ENCODE measurements at regions of chr6 and their contacts with region 1.

Region 1: GRCh38 chr6:155174576-155175211 is 89.1 kb upstream of the CLDN20 start:
- DNase-seq: peak in 3 of 5 donors; percentile 45 to 52 (median 50)
- ATAC-seq: peak; percentile 58 to 90 (median 83)
- H3K4me3 ChIP-seq: no peak overlapping the region
- H3K27ac ChIP-seq: no peak overlapping the region
- H3K4me1 ChIP-seq: peaks cover 0 to 27% (median 9%) of the 10 kb centered on the region in 12 donors
- H3K27me3 ChIP-seq: no peaks in the 10 kb centered on the region
- CTCF ChIP-seq: peak; percentile 35 to 75 (median 62)
- POLR2A ChIP-seq: no peak

Region 2: DNA sequence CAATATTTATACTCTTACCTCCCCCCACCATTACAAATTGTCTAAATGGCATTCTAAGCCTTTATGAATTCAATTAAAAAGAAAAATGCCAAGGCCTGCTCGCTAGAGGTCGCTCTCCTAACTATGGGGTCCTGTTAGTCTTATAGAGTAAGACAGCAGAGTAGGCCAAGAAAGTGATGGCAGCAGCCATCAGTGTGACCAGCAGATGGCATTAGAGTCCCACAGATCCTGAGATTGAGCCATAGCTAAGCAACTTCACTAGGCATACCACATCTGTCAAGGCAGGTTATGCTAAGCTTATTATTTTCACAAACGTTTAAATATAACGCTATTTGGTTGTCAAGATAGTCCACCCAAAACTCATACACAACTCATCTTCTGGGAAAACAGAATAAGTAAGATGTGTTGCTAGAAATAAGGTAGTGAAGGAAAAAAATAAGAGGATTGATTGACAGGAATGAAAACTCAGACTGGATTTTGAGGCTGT is 499.0 kb before region 1 on chr6:
- intact Hi-C with region 1: loop called in 9 of 10 experiments (anchors 2 to 10 kb)
- DNase-seq: peak; percentile 74 to 87 (median 83)
- ATAC-seq: peak; percentile 94 to 99 (median 98)
- H3K4me3 ChIP-seq: no peak overlapping the region
- H3K27ac ChIP-seq: no peak overlapping the region
- H3K4me1 ChIP-seq: no peaks in the 10 kb centered on the region
- H3K27me3 ChIP-seq: no peaks in the 10 kb centered on the region
- CTCF ChIP-seq: peak; percentile 95 to 100 (median 100)
- POLR2A ChIP-seq: no peak

Region 3: DNA sequence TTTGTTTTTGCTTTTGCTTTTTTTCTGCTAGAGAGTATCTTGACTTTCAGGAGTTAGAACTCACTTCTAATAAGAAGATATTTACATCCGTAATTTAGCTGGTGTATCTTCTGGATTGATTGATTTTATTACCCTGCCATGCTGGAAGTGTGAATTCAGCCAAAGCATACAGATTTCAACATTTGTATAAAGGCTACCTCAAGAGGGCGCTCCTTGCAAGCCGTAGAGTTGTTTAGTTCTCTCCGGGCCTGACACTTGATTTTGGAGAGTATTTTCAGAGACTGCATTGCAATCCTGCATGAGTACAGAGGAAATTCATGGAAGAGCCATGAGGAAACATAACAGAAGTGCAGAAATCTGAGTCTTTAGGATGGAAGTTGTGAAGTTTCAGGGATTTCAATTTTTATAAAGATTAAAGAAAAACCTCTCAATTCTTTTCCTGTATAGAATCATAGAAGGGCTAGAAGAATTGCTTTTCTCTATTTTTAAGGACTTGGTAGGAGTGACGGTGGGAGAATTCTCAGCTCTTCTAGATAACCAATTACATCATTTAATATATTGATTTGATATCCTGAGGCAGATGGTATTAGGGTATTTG is 246.3 kb before region 1 on chr6:
- intact Hi-C with region 1: loop called (anchors 1 to 5 kb)
- DNase-seq: peak in 2 of 5 donors; percentile 48 to 57
- ATAC-seq: peak in 3 of 4 donors; percentile 57 to 65 (median 63)
- H3K4me3 ChIP-seq: no peak overlapping the region
- H3K27ac ChIP-seq: no peak overlapping the region
- H3K4me1 ChIP-seq: peaks cover 0 to 24% (median 8%) of the 10 kb centered on the region in 12 donors
- H3K27me3 ChIP-seq: no peaks in the 10 kb centered on the region
- CTCF ChIP-seq: peak; percentile 60 to 85 (median 74)
- POLR2A ChIP-seq: no peak

Region 4: GRCh38 chr6:155248008-155249001 is 73.6 kb after region 1 on chr6:
- intact Hi-C with region 1: loop called in 9 of 10 experiments (anchors 2 to 5 kb)
- DNase-seq: peak in 3 of 5 donors; percentile 24 to 38 (median 34)
- ATAC-seq: peak in 3 of 4 donors; percentile 20 to 38 (median 37)
- H3K4me3 ChIP-seq: no peak overlapping the region
- H3K27ac ChIP-seq: peak overlapping the region in 1 of 12 donors; percentile 56
- H3K4me1 ChIP-seq: peaks cover 0 to 20% (median 6%) of the 10 kb centered on the region in 12 donors
- H3K27me3 ChIP-seq: no peaks in the 10 kb centered on the region
- CTCF ChIP-seq: peak; percentile 29 to 78 (median 58)
- POLR2A ChIP-seq: no peak

Region 5: GRCh38 chr6:155314092-155314772 is 139.5 kb after region 1 on chr6 and contains the start of gene TFB1M:
- intact Hi-C with region 1: loop called in 5 of 10 experiments (anchors 5 to 10 kb)
- DNase-seq: peak; percentile 98 to 99 (median 99)
- ATAC-seq: peak; percentile 99
- H3K4me3 ChIP-seq: peak within 1 kb of the TSS; percentile 38 to 91 (median 78)
- H3K27ac ChIP-seq: peak within 1 kb of the TSS; percentile 45 to 95 (median 85)
- H3K4me1 ChIP-seq: peaks cover 0 to 25% (median 6%) of the 10 kb centered on the region in 12 donors
- H3K27me3 ChIP-seq: no peaks in the 10 kb centered on the region
- CTCF ChIP-seq: peak in 1 of 12 donors; percentile 4
- POLR2A ChIP-seq: peak in 1 of 2 donors; percentile 90
- total RNA-seq, gene TFB1M: 11.4 to 24.5 (median 20.2) TPM

Measured in heart left ventricle (tissue), 16 donors.